ENCODE measurements at regions of chr10 and their contacts with region 1.

Region 1: GRCh38 chr10:99620713-99621453 is 644 bp upstream of the SLC25A28 start:
- DNase-seq: peak; percentile 26
- ATAC-seq: peak; percentile 95
- H3K4me3 ChIP-seq: peak overlapping the region; percentile 78
- H3K27ac ChIP-seq: peak overlapping the region; percentile 89
- H3K4me1 ChIP-seq: peaks cover 8% of the 10 kb centered on the region; the same call in 1 of the 2 replicates
- H3K27me3 ChIP-seq: no peaks in the 10 kb centered on the region
- CTCF ChIP-seq: no peak
- EP300 ChIP-seq: no peak; a peak in 1 of 4 replicates
- POLR2A ChIP-seq: peak; percentile 89
- RAD21 ChIP-seq: no peak

Region 2: GRCh38 chr10:99364125-99364524 is 256.8 kb before region 1 on chr10:
- CTCF ChIA-PET with region 1: no interaction called
- POLR2A ChIA-PET with region 1: no interaction called
- RAD21 ChIA-PET with region 1: no interaction called
- SMC1A ChIA-PET with region 1: no interaction called
- in situ Hi-C with region 1: no loop called
- intact Hi-C with region 1: no loop called
- DNase-seq: no peak
- ATAC-seq: no peak
- H3K4me3 ChIP-seq: no peak overlapping the region
- H3K27ac ChIP-seq: no peak overlapping the region
- H3K4me1 ChIP-seq: no peaks in the 10 kb centered on the region
- H3K27me3 ChIP-seq: no peaks in the 10 kb centered on the region
- CTCF ChIP-seq: no peak
- EP300 ChIP-seq: no peak
- POLR2A ChIP-seq: no peak
- RAD21 ChIP-seq: no peak

Region 3: GRCh38 chr10:99430451-99431189 is 190.3 kb before region 1 on chr10 and contains the start of gene GOT1:
- CTCF ChIA-PET with region 1: interaction called, 233 read pairs
- POLR2A ChIA-PET with region 1: interaction called, 8 read pairs
- RAD21 ChIA-PET with region 1: interaction called, 70 read pairs
- SMC1A ChIA-PET with region 1: interaction called, 38 read pairs
- in situ Hi-C with region 1: no loop called
- intact Hi-C with region 1: loop called (anchors 2 kb)
- DNase-seq: peak; percentile 99
- ATAC-seq: peak; percentile 97
- H3K4me3 ChIP-seq: peak within 1 kb of the TSS; percentile 97
- H3K27ac ChIP-seq: peak within 1 kb of the TSS; percentile 71
- H3K4me1 ChIP-seq: peaks cover 4% of the 10 kb centered on the region; the same call in 1 of the 2 replicates
- H3K27me3 ChIP-seq: no peaks in the 10 kb centered on the region
- CTCF ChIP-seq: no peak
- EP300 ChIP-seq: no peak
- POLR2A ChIP-seq: peak; percentile 94
- RAD21 ChIP-seq: no peak
- polyA plus RNA-seq, gene GOT1: 56.2 to 58.4 TPM

Region 4: DNA sequence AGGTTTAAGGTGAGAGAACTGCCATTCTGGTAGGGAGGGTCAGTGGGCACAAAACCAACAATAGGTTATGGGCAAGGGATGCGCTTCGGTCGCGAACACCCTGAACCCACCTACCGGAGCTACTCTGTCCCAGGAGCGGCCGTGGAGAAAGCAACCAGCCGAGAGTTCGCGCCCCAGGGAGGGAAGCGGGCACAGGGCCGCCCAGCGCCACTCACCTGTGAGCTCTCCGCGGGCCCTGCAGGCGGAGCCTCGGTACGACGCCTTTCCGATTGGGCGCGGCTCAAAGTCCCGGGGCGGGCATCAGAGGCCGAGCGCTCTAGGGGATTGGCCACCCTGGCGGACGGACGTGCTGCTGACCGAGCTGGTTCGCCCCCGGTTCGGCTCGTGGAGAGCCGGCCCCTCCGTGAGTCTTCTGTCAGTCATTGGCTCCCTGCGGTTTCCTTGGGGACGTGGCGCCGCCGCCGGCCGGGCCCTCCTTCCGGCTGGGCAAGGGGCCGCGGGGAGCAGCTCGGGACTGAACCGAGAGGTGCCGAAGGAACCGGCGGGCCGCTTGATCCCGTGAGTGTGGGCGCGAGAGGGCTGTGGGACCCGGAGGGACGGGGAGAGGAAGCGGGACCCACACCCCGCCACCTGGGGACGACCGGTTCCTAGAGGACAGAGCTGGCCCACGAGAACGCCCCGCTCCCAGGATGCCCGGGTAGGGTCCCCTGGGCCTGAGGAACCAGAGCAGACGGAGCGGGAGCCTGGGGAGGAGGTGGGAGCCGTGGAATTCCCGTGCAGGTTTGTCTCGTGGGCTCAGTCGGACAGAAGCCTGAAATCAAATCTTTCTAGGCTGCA is 38.4 kb after region 1 on chr10 and contains the start of gene ENTPD7:
- CTCF ChIA-PET with region 1: interaction called, 18 read pairs
- POLR2A ChIA-PET with region 1: interaction called, 14 read pairs
- RAD21 ChIA-PET with region 1: interaction called, 9 read pairs
- SMC1A ChIA-PET with region 1: interaction called, 8 read pairs
- in situ Hi-C with region 1: no loop called
- intact Hi-C with region 1: loop called (anchors 2 kb)
- DNase-seq: peak; percentile 85
- ATAC-seq: peak; percentile 100
- H3K4me3 ChIP-seq: peak within 1 kb of the TSS; percentile 94
- H3K27ac ChIP-seq: peak within 1 kb of the TSS; percentile 64
- H3K4me1 ChIP-seq: peaks cover 13% of the 10 kb centered on the region
- H3K27me3 ChIP-seq: no peaks in the 10 kb centered on the region
- CTCF ChIP-seq: 0 out of 6 replicates have a peak, but pooled peaks of 1 of the 3 experiments have one; percentile 8
- EP300 ChIP-seq: no peak
- POLR2A ChIP-seq: peak; percentile 85
- RAD21 ChIP-seq: no peak
- polyA plus RNA-seq, gene ENTPD7: 0.73 to 0.90 TPM

Measured in GM12878 (cell line).